Aorta (tissue), 5 donors: ENCODE measurements at regions of chr2 and their contacts with region 1.

Region 1: DNA sequence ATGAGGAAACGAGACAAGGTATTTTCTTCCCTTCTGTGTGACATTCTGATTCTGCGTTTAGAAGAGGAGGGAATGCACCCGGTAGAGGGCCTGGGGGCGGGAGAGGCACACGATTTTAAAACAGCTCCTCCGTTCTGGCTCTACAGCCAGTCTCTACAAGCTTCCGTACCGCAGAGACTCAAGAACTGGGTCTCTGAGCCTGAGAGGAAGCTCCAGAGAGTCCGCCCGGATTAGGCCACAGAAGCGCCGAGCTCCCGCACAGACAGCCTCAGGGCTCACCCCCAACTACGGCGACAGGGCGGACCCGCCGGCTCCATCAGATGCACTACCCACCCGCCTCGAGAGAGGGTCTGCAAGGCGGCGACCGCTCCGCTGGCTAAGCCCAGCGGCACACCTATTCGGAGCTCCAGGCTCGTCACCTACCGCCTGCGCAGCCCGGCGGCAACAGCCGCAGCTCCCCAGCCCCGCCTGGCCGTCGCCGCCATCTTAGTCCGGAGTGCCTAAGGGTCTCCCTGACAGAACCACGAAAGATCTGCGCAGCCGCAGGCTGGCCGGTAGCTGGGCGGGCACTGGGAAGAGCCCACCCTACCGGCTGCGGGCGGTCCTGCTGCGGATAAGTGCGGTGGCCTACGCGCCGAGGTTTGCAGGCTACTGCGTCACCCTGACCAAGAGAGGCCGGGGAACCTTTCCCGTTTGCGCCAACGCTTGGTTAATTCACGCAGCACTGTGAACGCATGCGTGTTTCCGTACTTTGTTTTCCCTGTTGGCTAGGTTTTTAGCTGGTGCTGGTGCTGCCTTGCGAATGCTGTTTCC is at the start of gene NFU1:
- DNase-seq: peak; percentile 96 to 98
- ATAC-seq: peak; percentile 98
- H3K4me3 ChIP-seq: peak within 1 kb of the TSS; percentile 30 to 66
- H3K27ac ChIP-seq: peak within 1 kb of the TSS; percentile 90 to 96
- H3K4me1 ChIP-seq: peaks cover 0 to 4% of the 10 kb centered on the region in 2 donors
- H3K27me3 ChIP-seq: no peaks in the 10 kb centered on the region
- total RNA-seq, gene NFU1: 39.8 to 45.3 TPM

Region 2: DNA sequence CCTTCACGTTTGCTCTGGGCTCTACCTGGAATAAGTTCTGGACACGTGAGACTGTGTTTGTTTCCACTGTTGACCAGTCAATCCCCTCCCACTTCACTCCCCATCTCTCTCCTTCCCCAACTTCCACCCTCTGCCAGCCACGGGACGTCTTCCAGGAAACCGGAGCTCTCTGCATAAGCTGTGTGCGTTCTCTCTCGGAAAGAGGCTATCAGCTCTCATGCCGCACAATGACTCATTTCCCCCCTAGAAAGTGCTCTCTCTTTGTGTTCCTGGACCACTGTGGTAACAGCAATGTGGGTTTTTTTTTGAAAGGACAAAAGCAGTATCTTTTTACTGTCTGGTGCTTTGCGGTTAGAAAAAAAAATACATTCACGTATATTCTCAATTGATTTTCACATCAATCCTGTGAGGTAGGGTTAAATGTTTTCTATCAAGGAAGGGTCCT is 783.6 kb before region 1 on chr2:
- intact Hi-C with region 1: no loop called
- DNase-seq: peak in 1 of 2 donors; percentile 73
- ATAC-seq: peak; percentile 36
- H3K4me3 ChIP-seq: no peak overlapping the region
- H3K27ac ChIP-seq: no peak overlapping the region
- H3K4me1 ChIP-seq: no peaks in the 10 kb centered on the region
- H3K27me3 ChIP-seq: no peaks in the 10 kb centered on the region

Region 3: GRCh38 chr2:69386789-69387734 is 50.1 kb before region 1 on chr2 and contains the start of gene GFPT1:
- intact Hi-C with region 1: loop called (anchors 5 kb)
- DNase-seq: peak; percentile 97 to 98
- ATAC-seq: peak; percentile 98
- H3K4me3 ChIP-seq: peak within 1 kb of the TSS; percentile 79 to 80
- H3K27ac ChIP-seq: peak within 1 kb of the TSS; percentile 68 to 83
- H3K4me1 ChIP-seq: no peaks in the 10 kb centered on the region
- H3K27me3 ChIP-seq: no peaks in the 10 kb centered on the region
- total RNA-seq, gene GFPT1: 67.8 to 95.9 TPM